Aorta (tissue), 5 donors: ENCODE measurements at regions of chr9 and their contacts with region 1.

Region 1: GRCh38 chr9:34994260-34994899 is 4.8 kb downstream of the DNAJB5 start:
- DNase-seq: no peak
- ATAC-seq: no peak
- H3K4me3 ChIP-seq: no peak overlapping the region
- H3K27ac ChIP-seq: peak overlapping the region; percentile 87 to 99
- H3K4me1 ChIP-seq: no peaks in the 10 kb centered on the region
- H3K27me3 ChIP-seq: no peaks in the 10 kb centered on the region

Region 2: DNA sequence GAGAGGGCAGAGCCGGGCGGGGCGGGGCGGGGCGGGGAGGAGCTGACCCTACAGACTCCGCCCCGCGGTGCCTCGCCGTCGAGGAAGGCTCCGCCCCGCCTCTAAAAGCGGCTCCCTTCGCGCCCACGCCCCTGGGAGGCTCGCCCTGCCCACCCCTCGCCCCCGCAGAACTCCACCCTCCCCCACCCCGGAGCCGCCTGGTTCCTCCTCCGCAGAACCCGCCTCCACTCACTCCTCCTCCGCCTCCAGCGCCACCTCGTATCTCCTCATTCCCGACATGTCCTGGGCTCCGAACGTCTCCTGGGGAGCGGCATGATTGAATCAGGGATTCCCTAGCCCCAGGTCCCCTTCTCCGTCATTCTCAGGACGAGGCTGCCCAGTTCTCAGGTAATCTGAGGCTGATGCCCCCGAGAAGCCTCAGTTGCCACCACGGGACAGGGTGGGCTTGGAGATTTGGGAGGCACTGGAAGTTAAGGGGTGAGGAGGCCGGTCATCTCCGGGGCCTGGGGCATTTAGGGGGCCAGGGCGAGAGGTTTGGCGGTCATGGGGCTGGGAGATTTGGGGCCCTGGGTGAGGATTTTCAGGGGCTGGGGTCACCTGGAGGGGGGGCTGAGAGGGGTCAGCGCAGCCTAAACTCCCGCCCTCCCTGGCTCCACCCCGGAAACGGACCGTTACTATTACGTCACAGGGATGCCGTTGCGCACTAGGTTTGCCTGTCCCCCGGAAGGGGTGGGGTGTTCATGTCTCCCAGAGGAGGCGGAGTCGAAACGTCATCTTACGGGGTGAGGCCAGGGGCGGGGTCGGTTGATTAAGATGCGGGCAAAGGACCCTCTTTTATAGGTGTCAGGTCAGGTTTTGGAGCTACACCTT is 328.8 kb before region 1 on chr9:
- intact Hi-C with region 1: loop called in 1 of 2 experiments (anchors 10 kb)
- DNase-seq: peak; percentile 96 to 98
- ATAC-seq: peak; percentile 95
- H3K4me3 ChIP-seq: peak overlapping the region; percentile 55 to 73
- H3K27ac ChIP-seq: peak overlapping the region; percentile 25 to 96
- H3K4me1 ChIP-seq: no peaks in the 10 kb centered on the region
- H3K27me3 ChIP-seq: no peaks in the 10 kb centered on the region

Region 3: DNA sequence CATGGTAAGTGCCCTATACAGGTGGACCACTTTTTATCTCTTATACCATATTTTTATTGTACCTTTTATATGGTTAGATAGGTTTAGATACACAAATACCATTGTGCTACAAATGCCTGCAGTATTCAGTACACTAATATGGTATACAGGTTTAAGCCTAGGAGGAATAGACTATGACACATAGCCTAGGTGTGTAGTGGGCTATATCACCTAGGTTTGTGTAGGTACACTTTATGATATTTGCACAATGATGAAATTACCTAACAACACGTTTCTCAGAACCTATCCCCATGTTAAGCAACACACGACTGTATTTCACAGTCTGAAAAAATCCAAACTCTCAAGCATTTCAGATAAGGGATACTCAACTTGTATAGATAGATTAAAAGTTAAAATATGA is 45.9 kb before region 1 on chr9:
- intact Hi-C with region 1: no loop called
- DNase-seq: no peak
- ATAC-seq: no peak
- H3K4me3 ChIP-seq: no peak overlapping the region
- H3K27ac ChIP-seq: no peak overlapping the region
- H3K4me1 ChIP-seq: no peaks in the 10 kb centered on the region
- H3K27me3 ChIP-seq: peaks cover 0 to 3% of the 10 kb centered on the region in 2 donors

Region 4: GRCh38 chr9:34983209-34983608 is 11.2 kb before region 1 on chr9:
- intact Hi-C with region 1: no loop called
- DNase-seq: no peak
- ATAC-seq: no peak
- H3K4me3 ChIP-seq: no peak overlapping the region
- H3K27ac ChIP-seq: no peak overlapping the region
- H3K4me1 ChIP-seq: no peaks in the 10 kb centered on the region
- H3K27me3 ChIP-seq: no peaks in the 10 kb centered on the region

Region 5: DNA sequence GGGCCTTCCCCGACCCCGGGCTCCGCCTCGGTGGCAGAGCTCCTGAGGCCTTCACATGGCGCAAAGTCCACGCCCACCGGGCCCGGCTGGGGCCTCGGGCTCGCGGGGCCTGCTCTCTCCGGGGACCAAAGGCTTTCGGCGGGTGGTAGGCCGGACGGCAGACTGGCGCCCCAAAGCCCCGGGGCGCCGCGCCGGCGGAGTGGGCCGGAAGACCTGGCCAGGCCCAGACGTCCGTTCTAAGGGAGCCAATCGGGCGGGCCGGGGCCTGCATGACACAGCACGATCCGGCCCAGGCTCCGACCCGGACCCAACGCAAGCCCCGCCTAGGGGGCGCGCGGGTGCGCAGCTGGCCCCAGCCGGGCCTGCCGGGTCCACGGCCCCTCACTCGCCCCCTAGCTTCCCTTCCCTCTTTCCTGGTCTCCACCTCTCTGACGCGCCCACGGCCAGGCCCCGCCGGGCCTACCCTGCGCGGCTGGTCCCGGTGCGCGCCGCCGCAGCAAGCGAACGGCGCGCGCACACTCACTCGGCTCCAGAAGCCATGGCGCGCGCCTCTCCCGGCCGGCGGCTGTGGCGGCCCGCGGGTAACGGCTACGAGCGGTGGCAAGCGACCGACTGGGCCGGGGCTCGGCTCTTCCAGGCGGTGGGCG is 77.6 kb after region 1 on chr9:
- intact Hi-C with region 1: loop called (anchors 5 kb)
- DNase-seq: peak; percentile 90 to 94
- ATAC-seq: peak; percentile 90
- H3K4me3 ChIP-seq: peak overlapping the region; percentile 61 to 93
- H3K27ac ChIP-seq: peak overlapping the region; percentile 93 to 98
- H3K4me1 ChIP-seq: peaks cover 0 to 4% of the 10 kb centered on the region in 2 donors
- H3K27me3 ChIP-seq: no peaks in the 10 kb centered on the region

Region 6: GRCh38 chr9:35111001-35111933 is 116.9 kb after region 1 on chr9:
- intact Hi-C with region 1: loop called in 1 of 2 experiments (anchors 5 kb)
- DNase-seq: peak; percentile 99
- ATAC-seq: peak; percentile 88
- H3K4me3 ChIP-seq: peak overlapping the region; percentile 58 to 79
- H3K27ac ChIP-seq: peak overlapping the region; percentile 70 to 97
- H3K4me1 ChIP-seq: no peaks in the 10 kb centered on the region
- H3K27me3 ChIP-seq: no peaks in the 10 kb centered on the region